ENCODE measurements at regions of chr11 and their contacts with region 1.

Region 1: DNA sequence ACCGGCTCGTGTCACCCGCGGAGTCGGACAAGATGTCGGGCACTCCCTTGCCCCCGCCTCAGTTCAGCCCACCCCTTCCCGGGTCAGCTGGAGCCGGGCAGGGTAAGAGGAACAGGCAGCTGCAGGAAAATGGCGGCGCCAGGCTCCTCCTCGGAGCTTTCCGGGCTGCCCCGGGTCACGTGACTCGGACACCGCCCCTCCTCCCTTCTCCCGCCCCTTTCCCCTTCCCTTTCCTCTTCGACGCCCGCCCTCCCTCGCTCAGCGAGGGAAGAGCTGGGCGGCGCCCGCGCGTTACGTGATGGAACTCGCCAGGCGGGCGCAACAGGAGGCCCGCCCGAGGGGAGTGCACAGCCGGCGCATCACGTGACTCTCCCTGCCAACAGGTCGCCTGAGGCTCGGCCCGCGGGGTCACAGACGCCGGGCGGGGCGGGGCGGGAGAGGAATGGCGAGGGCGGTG is at the start of gene PICALM:
- DNase-seq: peak; percentile 98
- ATAC-seq: peak; percentile 79
- H3K4me3 Mint-ChIP-seq: peak within 1 kb of the TSS; percentile 99
- H3K27ac Mint-ChIP-seq: peak within 1 kb of the TSS; percentile 98
- H3K4me1 Mint-ChIP-seq: peaks cover 40% of the 10 kb centered on the region
- H3K27me3 Mint-ChIP-seq: no peaks in the 10 kb centered on the region
- CTCF ChIP-seq: no peak
- total RNA-seq, gene PICALM: 64.4 to 69.9 TPM (median 65.1 TPM) in 3 replicates

Region 2: DNA sequence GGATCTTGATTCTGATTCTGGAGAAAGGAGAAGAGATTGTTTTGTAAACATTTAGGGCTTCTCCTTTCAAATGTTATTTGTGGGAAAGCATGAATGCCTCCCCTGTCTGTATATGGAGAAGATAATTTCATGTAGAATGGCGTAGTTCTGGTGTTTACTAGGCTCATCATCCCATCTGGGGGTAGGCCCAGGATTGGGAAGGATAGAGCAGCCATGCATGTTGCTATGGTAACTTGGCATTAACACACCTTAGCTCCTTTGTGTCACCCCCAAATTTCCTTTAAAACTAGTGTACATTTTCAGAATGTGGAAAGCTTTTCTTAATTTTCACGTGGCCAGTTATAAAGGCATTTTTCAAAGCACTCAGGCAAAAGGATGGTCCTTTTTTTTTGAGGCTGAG is 118.0 kb after region 1 on chr11:
- CTCF ChIA-PET with region 1: no interaction called
- POLR2A ChIA-PET with region 1: no interaction called
- DNase-seq: no peak
- ATAC-seq: no peak
- H3K4me3 Mint-ChIP-seq: no peak overlapping the region
- H3K27ac Mint-ChIP-seq: no peak overlapping the region
- H3K4me1 Mint-ChIP-seq: no peaks in the 10 kb centered on the region
- H3K27me3 Mint-ChIP-seq: no peaks in the 10 kb centered on the region
- CTCF ChIP-seq: no peak

Region 3: GRCh38 chr11:86244522-86245368 is 175.8 kb after region 1 on chr11 and contains the start of gene EED:
- CTCF ChIA-PET with region 1: no interaction called
- POLR2A ChIA-PET with region 1: interaction called, 13 read pairs
- DNase-seq: peak; percentile 97
- ATAC-seq: peak; percentile 83
- H3K4me3 Mint-ChIP-seq: no peak within 1 kb of the TSS
- H3K27ac Mint-ChIP-seq: no peak within 1 kb of the TSS
- H3K4me1 Mint-ChIP-seq: peaks cover 35% of the 10 kb centered on the region
- H3K27me3 Mint-ChIP-seq: no peaks in the 10 kb centered on the region; the same call in 1 of the 2 replicates
- CTCF ChIP-seq: no peak
- total RNA-seq, gene EED: 24.7 to 27.7 TPM (median 27.3 TPM) in 3 replicates

Region 4: DNA sequence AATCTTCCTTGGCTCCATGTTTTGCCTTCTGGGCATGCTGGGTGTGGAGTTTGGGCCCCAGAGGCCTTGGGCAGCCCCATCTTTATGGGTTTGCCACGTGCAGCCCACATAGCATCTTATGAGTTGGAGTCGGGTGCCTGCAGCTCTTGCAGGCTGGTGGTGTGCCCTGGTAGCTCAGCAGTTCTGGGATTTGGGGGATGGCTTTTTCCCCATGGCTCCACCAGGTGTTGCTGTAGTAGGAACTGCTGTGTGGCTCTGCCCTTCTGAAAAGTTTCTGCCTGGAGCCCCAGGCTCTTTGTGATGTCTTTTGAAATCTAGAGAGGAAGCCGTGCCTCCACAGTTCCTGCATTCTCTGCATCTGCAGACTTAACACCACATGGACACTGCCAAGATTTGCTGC is 192.4 kb after region 1 on chr11:
- CTCF ChIA-PET with region 1: no interaction called
- POLR2A ChIA-PET with region 1: no interaction called
- DNase-seq: peak; percentile 21
- ATAC-seq: peak; percentile 79
- H3K4me3 Mint-ChIP-seq: no peak overlapping the region
- H3K27ac Mint-ChIP-seq: no peak overlapping the region
- H3K4me1 Mint-ChIP-seq: no peaks in the 10 kb centered on the region
- H3K27me3 Mint-ChIP-seq: no peaks in the 10 kb centered on the region
- CTCF ChIP-seq: no peak